Dorsolateral prefrontal cortex (tissue), 120 donors: ENCODE measurements at regions of chr12 and their contacts with region 1.

Region 1: GRCh38 chr12:112012775-112013600 is at the starts of genes ERP29 and TMEM116:
- DNase-seq: peak; percentile 99 to 100 (median 99)
- H3K4me3 ChIP-seq: peak within 1 kb of the TSS; percentile 50 to 100 (median 95)
- H3K27ac ChIP-seq: peak within 1 kb of the TSS; percentile 74 to 99 (median 95)
- H3K27me3 ChIP-seq: no peaks in the 10 kb centered on the region
- CTCF ChIP-seq: peak; percentile 8 to 74 (median 51)
- total RNA-seq, gene ERP29: 31.1 to 63.4 (median 46.7) TPM
- total RNA-seq, gene TMEM116: 13.7 to 34.8 (median 21.9) TPM

Region 2: GRCh38 chr12:111409780-111410430 is 603.1 kb before region 1 on chr12:
- intact Hi-C with region 1: no loop called
- DNase-seq: no peak
- H3K4me3 ChIP-seq: peak overlapping the region in 46 of 59 donors; percentile 1 to 96 (median 33)
- H3K27ac ChIP-seq: peak overlapping the region; percentile 0 to 93 (median 83)
- H3K27me3 ChIP-seq: no peaks in the 10 kb centered on the region
- CTCF ChIP-seq: no peak

Region 3: GRCh38 chr12:111685744-111686517 is 327.1 kb before region 1 on chr12 and contains the starts of genes ACAD10 and BRAP:
- intact Hi-C with region 1: loop called in 1 of 2 experiments (anchors 5 kb)
- DNase-seq: peak; percentile 83 to 95 (median 89)
- H3K4me3 ChIP-seq: peak within 1 kb of the TSS; percentile 64 to 100 (median 96)
- H3K27ac ChIP-seq: peak within 1 kb of the TSS; percentile 5 to 93 (median 80)
- H3K27me3 ChIP-seq: no peaks in the 10 kb centered on the region
- CTCF ChIP-seq: peak in 40 of 56 donors; percentile 6 to 63 (median 40)
- total RNA-seq, gene ACAD10: 19.3 to 49.9 (median 31.8) TPM
- total RNA-seq, gene BRAP: 20.6 to 31.0 (median 25.6) TPM

Region 4: DNA sequence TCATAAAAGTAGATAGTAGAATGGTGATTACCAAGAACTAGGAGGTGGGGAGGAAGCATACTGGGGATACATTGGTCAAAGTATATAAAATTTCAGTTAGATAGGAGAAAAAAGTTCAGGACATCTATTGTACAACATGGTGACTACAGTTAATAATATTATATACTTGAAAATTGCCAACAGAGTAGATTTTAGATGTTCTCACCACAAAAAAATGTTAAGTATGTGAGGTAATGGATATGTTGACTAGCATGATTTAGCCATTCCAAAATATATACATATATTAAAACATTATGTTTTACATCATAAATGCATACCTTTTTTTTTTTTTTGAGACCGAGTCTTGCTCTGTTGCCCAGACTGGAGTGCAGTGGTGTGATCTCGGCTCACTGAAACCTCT is 31.0 kb before region 1 on chr12:
- intact Hi-C with region 1: no loop called
- DNase-seq: no peak
- H3K4me3 ChIP-seq: no peak overlapping the region
- H3K27ac ChIP-seq: no peak overlapping the region
- H3K27me3 ChIP-seq: no peaks in the 10 kb centered on the region
- CTCF ChIP-seq: no peak

Region 5: DNA sequence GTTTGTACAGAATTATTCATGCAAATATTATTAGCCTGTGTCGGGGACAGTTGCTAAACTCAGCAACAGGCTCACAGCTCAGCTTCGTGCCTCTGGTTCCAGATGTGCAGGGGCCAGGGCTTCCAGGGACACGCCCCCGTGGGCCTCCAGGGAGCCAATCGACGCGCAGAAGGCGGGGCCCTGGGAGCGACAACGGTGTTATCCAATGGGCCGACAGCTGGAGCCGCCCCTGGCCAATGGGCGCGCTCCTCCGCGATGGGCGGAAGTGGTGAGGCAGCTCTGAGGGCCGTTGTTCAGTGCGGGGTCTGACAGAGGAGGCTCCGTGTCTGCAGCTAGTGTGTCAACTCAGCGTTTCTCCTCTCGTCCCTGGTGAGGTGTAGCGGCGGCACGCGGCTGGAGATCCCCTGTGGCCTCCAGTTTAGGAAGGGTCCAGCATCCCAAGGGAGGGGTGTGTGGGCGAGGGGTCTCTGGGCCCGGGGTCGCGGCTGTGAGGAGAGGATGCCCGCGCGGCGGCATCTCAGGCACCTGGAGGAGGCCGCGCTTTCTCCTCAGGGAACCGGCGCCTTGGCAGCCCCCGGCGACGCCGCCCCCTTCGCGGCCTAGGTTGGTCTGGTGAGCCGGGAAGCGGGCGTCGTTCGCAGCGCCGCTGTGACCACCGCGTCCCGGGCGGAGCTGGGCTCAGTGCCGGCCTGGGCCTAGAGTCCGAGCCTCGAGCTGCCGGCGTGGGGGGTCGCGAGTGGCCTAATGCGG is 112.4 kb after region 1 on chr12 and contains the start of gene TRAFD1:
- intact Hi-C with region 1: loop called in 1 of 2 experiments (anchors 10 kb)
- DNase-seq: peak; percentile 96 to 100 (median 98)
- H3K4me3 ChIP-seq: peak within 1 kb of the TSS; percentile 65 to 99 (median 95)
- H3K27ac ChIP-seq: peak within 1 kb of the TSS; percentile 44 to 97 (median 91)
- H3K27me3 ChIP-seq: no peaks in the 10 kb centered on the region
- CTCF ChIP-seq: peak in 18 of 56 donors; percentile 6 to 39 (median 16)
- total RNA-seq, gene TRAFD1: 15.1 to 47.9 (median 24.8) TPM